GM10248 (cell line): ENCODE measurements at regions of chr5 and their contacts with region 1.

Region 1: GRCh38 chr5:18465833-18466591 is 831.8 kb downstream of the TAF11L14 start:
- DNase-seq: peak; percentile 39
- CTCF ChIP-seq: peak; percentile 86

Region 2: DNA sequence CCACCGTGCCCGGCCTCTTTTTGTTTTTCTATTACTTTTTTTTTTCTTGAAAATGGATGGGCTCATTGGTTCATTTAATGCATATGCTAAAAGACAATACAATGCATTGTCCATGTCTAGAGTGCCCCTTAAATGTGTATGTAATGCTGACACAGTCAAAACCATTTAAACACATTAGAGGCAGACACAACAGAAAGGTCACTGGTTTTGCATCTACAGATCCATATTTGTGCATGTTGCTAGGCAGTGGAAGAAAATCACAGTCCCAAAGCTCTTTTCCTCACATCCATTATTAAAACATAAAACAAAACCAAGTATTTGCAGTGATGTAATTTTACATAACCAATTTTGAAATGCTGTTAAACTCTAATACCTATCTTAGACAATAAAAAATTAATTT is 442.7 kb before region 1 on chr5:
- CTCF ChIA-PET with region 1: no interaction called
- POLR2A ChIA-PET with region 1: no interaction called
- DNase-seq: no peak
- CTCF ChIP-seq: no peak

Region 3: GRCh38 chr5:18455521-18455920 is 10.5 kb before region 1 on chr5:
- CTCF ChIA-PET with region 1: interaction called, 11 read pairs
- POLR2A ChIA-PET with region 1: no interaction called
- DNase-seq: no peak
- CTCF ChIP-seq: no peak

Region 4: DNA sequence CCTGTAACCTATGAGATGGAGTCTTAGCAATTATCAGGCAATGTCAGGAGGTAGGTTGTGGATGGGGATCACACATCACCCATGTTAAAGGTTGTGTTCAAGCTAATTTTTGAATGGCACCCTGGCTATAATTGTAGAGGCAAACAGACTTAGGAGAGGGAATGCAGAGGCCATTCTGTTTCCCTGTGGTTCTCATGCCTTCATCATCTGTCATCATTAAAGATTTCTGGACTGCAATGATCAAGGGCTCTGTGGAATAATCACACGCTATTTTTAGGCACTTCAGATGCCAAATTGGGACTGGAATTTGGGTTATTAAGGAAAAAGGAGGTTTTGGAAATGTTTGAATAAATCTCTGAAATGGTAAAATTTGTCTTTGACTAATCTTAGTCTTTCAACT is 233.7 kb after region 1 on chr5:
- CTCF ChIA-PET with region 1: interaction called, 32 read pairs
- POLR2A ChIA-PET with region 1: no interaction called
- DNase-seq: no peak
- CTCF ChIP-seq: no peak